ENCODE measurements at regions of chr19 and their contacts with region 1.

Region 1: GRCh38 chr19:38964738-38965137 is 10.8 kb downstream of the FBXO17 start:
- DNase-seq: no peak
- ATAC-seq: no peak
- H3K4me3 ChIP-seq: no peak overlapping the region
- H3K27ac ChIP-seq: no peak overlapping the region
- H3K4me1 ChIP-seq: peaks cover 7% of the 10 kb centered on the region
- H3K27me3 ChIP-seq: no peaks in the 10 kb centered on the region
- CTCF ChIP-seq: no peak

Region 2: GRCh38 chr19:38949580-38950367 is 15.0 kb before region 1 on chr19:
- intact Hi-C with region 1: no loop called
- DNase-seq: peak; percentile 87 to 88
- ATAC-seq: peak; percentile 89 to 95 (median 92)
- H3K4me3 ChIP-seq: peak overlapping the region; percentile 56
- H3K27ac ChIP-seq: no peak overlapping the region
- H3K4me1 ChIP-seq: peaks cover 6% of the 10 kb centered on the region
- H3K27me3 ChIP-seq: no peaks in the 10 kb centered on the region
- CTCF ChIP-seq: no peak

Region 3: GRCh38 chr19:39328046-39328705 is 363.4 kb after region 1 on chr19:
- intact Hi-C with region 1: loop called in 1 of 2 experiments (anchors 5 kb)
- DNase-seq: peak; percentile 84 to 89
- ATAC-seq: peak; percentile 73 to 85 (median 78)
- H3K4me3 ChIP-seq: no peak overlapping the region
- H3K27ac ChIP-seq: no peak overlapping the region
- H3K4me1 ChIP-seq: no peaks in the 10 kb centered on the region
- H3K27me3 ChIP-seq: no peaks in the 10 kb centered on the region
- CTCF ChIP-seq: peak; percentile 95